Posterior vena cava (tissue), 2 donors: ENCODE measurements at regions of chr5 and their contacts with region 1.

Region 1: DNA sequence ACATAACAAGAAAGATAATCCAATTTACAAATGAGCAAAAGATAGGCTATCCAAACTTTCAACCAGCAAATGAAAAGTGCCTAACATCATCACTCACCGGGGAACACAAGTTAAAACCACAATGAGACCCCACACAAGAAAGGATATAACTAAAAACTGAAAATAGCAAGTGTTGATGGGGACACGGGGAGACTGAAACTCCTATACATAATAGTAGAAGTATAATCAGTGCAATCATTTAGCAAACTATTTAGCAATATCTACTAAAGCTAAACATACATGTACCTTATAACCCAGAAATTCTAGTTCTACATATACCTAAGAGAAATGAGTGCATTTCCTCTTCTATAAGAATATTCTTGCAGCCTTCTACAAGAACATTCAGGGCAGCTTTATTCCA is 72.5 kb downstream of the RICTOR start:
- DNase-seq: no peak

Region 2: GRCh38 chr5:38961691-38962090 is 40.0 kb before region 1 on chr5:
- intact Hi-C with region 1: no loop called
- DNase-seq: no peak

Region 3: GRCh38 chr5:39080597-39081204 is 79.0 kb after region 1 on chr5:
- intact Hi-C with region 1: loop called in 1 of 2 experiments (anchors 5 kb)
- DNase-seq: no peak

Region 4: GRCh38 chr5:39224196-39224761 is 222.6 kb after region 1 on chr5:
- intact Hi-C with region 1: no loop called
- DNase-seq: peak; percentile 81